GM18951 (cell line): ENCODE measurements at regions of chr20 and their contacts with region 1.

Region 1: GRCh38 chr20:32028647-32029372 is 18.6 kb downstream of the CCM2L start:
- POLR2A ChIP-seq: no peak

Region 2: DNA sequence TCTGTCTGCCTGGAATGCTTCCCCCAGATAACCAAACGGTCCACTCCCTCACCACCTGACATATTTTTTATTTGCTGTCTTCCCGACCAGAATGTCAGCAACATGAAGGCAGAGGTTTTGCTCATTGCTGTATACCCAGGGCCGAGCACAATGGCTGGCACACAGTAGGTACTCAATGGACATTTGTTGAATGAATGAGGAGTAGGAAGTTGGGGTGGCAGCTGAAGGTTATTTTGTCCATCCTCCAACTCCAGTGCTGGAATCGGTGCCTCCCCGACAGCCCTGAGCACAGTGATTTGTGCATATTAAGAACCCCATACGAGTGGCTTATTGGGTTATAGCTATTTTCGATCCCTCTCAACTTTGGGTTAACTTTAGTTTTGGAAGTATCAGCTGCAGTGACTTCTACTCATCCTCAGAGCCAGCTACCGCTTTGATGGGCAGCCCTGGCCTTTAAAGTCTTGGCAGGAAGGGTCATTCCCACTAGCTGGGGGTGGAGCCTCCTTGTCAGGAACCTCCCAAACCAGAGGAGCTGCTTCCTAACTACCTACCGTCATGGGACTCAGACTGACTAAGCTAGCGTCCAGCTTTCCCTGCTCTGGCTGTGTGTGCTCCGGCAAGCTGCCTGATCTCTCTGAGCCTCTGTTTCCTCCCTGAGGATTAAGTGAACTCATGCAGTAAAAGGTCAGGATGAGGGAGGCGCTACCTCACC is 168.7 kb before region 1 on chr20:
- in situ Hi-C with region 1: loop called (anchors 10 kb)
- POLR2A ChIP-seq: no peak

Region 3: GRCh38 chr20:33689973-33690372 is 1661.2 kb after region 1 on chr20:
- in situ Hi-C with region 1: no loop called
- POLR2A ChIP-seq: no peak